Activated CD4-positive, alpha-beta T cell treated with anti-CD3 and anti-CD28 coated beads, Interleukin-2, amount 10 ng/mL, durations not matched to agents 24 days and 14 days (primary cell): ENCODE measurements at regions of chr16 and their contacts with region 1.

Region 1: GRCh38 chr16:30429678-30430427 is at the start of gene DCTPP1:
- DNase-seq: peak; percentile 99
- H3K4me3 Mint-ChIP-seq: no peak within 1 kb of the TSS
- H3K27ac Mint-ChIP-seq: no peak within 1 kb of the TSS
- H3K4me1 Mint-ChIP-seq: peaks cover 27% of the 10 kb centered on the region
- H3K27me3 Mint-ChIP-seq: no peaks in the 10 kb centered on the region
- total RNA-seq, gene DCTPP1: 167 and 176 TPM in 2 replicates

Region 2: DNA sequence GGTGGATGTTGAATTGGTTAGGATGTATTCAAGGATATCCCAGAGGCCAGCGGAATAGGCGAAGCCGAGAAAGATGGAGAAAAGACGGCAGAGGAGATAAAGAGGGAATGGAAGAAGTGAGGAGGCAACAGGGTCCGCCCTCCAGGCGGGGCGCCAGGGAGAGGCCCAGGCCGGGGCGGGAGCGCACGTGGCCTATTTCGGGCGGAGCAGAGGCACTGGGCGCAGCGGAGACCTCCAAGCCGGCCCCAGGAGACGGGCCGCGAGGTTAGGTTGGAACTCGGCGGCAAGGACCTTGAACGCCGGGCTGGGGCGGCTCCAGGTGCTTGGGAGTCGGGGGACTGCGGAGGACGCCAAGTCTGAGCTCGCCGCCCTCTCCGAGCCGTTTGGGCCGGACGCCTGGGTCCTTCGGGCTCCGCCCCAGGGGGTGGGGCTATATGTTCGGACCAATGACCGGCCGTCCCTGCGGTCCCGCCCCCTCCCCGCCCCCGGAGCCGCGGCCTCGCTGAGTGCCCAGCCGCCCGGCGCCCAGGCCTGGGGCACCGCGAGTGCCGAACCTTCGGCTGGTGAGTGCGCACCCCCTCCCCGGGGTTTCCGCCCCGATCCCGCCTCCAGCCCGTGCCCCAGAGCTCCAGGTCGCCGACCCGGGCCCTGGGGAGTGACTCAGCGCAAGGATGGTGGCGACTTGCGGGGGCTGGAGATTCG is 22.6 kb before region 1 on chr16 and contains the start of gene ZNF771:
- intact Hi-C with region 1: no loop called
- DNase-seq: peak; percentile 97
- H3K4me3 Mint-ChIP-seq: peak within 1 kb of the TSS; percentile 94
- H3K27ac Mint-ChIP-seq: peak within 1 kb of the TSS; percentile 99
- H3K4me1 Mint-ChIP-seq: peaks cover 29% of the 10 kb centered on the region
- H3K27me3 Mint-ChIP-seq: peaks cover 6% of the 10 kb centered on the region
- total RNA-seq, gene ZNF771: 8.6 and 10.3 TPM in 2 replicates

Region 3: DNA sequence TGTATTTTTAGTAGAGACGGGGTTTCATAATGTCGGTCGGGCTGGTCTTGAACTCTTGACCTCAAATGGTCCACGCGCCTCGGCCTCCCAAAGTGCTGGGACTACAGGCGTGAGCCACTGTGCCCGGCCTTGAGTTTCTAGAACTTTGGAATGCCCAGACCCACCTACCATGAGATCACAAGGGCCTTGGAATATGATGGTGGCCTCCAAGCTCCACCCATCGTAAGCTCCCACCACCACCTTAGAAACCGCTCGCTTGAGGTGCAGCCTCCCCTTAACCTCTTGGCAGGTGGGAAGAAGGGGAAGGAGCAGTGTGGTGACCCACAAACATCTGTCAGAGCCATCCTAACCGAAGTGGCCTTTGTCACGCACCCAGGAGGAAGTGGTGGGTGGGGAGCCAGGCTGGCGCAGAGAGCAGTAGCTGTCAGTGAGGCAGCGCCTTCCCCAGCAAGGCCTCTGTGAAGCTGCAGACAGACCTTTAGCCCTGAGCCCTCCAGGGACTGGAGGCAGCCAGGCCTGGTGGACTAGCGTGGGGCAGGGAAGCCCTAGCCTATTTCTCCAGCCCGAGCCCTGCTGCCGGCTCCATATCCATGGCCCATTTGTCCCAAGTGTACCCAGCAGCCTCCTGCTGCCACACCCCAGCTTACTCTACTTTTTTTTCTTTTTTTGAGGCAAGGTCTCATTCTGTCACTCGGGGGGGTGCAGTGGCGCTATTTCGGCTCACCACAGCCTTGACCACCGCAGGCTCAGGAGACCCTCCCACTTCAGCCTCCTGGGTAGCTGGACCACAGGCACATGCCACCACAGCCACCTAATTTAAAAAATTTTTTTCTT is 28.9 kb after region 1 on chr16:
- intact Hi-C with region 1: loop called (anchors 1 kb)
- DNase-seq: peak; percentile 96
- H3K4me3 Mint-ChIP-seq: peak overlapping the region; percentile 75
- H3K27ac Mint-ChIP-seq: peak overlapping the region; percentile 95
- H3K4me1 Mint-ChIP-seq: peaks cover 68% of the 10 kb centered on the region
- H3K27me3 Mint-ChIP-seq: no peaks in the 10 kb centered on the region

Region 4: DNA sequence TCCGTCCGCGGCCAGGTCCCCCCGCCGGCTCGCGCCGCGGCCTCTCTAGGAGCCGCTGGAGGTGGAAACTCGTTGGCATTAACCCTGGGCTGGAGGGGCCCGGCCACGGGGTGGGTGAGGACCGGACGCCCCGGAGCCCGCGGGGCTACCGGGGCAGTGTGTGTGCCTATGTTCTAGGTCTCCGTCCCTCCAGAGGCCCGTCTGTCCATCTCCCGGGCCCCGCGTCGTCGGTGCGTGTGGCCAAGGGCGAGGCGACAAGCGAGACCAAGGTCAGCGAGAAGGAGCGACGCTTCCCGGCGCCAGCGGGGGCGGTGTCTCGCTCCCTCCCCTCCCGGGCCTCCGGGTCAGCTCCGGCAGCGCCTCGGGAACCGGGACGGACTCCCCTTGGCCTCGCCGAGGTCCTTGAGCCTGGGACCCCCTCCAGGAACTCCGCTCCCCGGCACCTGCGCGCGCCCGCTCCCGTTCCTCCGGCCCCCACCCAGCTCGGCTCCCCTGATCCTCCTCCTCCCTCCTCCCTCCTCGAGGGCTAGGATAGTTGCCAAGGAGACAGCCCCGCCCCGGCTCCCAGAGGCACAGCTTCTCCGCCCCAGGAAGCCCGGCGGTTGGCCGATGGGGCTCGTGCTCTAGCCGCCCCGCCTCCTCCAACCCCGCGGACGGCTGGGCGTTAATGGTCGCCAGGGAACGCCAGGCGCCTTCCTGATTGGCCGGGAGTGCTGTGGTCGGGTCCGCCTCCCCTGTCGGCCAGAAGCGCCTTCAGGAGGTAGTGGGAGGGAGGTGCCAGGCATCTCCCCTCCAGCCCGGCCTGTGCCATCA is 97.2 kb after region 1 on chr16:
- intact Hi-C with region 1: loop called (anchors 1 kb)
- DNase-seq: peak; percentile 98
- H3K4me3 Mint-ChIP-seq: peak overlapping the region; percentile 81
- H3K27ac Mint-ChIP-seq: peak overlapping the region; percentile 81
- H3K4me1 Mint-ChIP-seq: peaks cover 26% of the 10 kb centered on the region
- H3K27me3 Mint-ChIP-seq: no peaks in the 10 kb centered on the region

Region 5: GRCh38 chr16:30585400-30586189 is 155.7 kb after region 1 on chr16 and contains the start of gene ZNF785:
- intact Hi-C with region 1: loop called (anchors 1 kb)
- DNase-seq: peak; percentile 98
- H3K4me3 Mint-ChIP-seq: peak within 1 kb of the TSS; percentile 90
- H3K27ac Mint-ChIP-seq: peak within 1 kb of the TSS; percentile 91
- H3K4me1 Mint-ChIP-seq: peaks cover 25% of the 10 kb centered on the region
- H3K27me3 Mint-ChIP-seq: no peaks in the 10 kb centered on the region
- total RNA-seq, gene ZNF785: 17.1 and 17.8 TPM in 2 replicates

Region 6: GRCh38 chr16:30605158-30605557 is 175.3 kb after region 1 on chr16:
- intact Hi-C with region 1: no loop called
- DNase-seq: no peak
- H3K4me3 Mint-ChIP-seq: no peak overlapping the region
- H3K27ac Mint-ChIP-seq: no peak overlapping the region
- H3K4me1 Mint-ChIP-seq: peaks cover 15% of the 10 kb centered on the region
- H3K27me3 Mint-ChIP-seq: no peaks in the 10 kb centered on the region

Region 7: DNA sequence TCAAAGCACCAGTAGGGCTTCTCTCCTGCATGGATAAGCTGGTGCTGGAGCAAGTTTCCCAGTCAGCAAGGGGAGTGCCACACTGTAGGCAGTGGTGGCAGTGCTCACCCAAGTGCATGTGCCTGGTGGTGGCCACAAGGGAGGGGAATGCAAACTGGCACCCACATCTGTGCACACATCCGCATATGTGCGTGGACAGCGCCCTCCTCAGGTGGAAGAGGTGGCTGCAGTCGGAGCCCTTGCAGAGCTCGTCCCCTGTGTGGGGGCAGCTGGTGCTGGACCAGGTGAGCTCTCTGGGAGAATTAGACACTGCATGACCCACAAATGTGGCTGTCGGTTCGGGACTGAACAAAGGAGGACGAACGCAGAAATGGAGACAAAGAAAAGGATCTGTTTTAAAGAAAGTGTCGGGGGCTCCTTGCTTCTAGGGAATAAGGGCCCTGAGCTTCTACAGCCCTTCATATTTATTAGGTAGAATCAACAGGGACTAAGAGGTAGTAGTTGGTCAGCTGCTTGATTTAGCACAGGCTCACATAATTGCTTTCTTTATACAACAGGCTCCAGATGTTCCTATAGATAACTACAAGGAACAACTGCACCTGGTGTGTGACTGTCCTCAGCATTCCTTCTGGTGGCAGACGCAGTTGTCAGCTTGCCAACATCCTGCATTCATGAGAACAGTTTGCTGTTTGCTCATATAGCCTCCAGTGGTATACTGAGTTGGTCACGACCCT is 185.7 kb after region 1 on chr16:
- intact Hi-C with region 1: loop called (anchors 5 kb)
- DNase-seq: peak; percentile 92
- H3K4me3 Mint-ChIP-seq: no peak overlapping the region
- H3K27ac Mint-ChIP-seq: no peak overlapping the region
- H3K4me1 Mint-ChIP-seq: peaks cover 11% of the 10 kb centered on the region
- H3K27me3 Mint-ChIP-seq: peaks cover 16% of the 10 kb centered on the region

Region 8: GRCh38 chr16:30669896-30670797 is 240.3 kb after region 1 on chr16:
- intact Hi-C with region 1: no loop called
- DNase-seq: no peak
- H3K4me3 Mint-ChIP-seq: no peak overlapping the region
- H3K27ac Mint-ChIP-seq: no peak overlapping the region
- H3K4me1 Mint-ChIP-seq: peaks cover 5% of the 10 kb centered on the region
- H3K27me3 Mint-ChIP-seq: no peaks in the 10 kb centered on the region